PC-9 (cell line): ENCODE measurements at regions of chr4 and their contacts with region 1.

Region 1: DNA sequence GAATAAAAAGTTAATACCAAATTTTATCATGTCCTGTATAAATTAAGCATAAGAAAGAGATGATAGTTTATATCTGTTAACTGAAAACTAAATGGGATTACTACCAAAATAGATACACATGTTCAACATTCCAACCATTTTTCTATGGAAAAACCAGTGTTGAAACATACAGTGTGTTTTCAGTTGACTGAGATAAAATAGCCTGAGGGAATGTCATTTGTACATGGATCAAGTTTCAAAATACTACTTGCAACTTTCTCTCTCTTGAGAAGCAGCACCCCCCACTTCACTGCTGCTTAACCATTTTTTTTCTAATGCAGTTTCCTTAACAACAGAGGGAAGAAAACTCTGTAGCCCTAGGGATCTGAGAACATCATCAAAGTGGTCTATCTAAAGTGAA is 70.8 kb downstream of the NPNT start:
- DNase-seq: peak; percentile 2 to 65
- H3K4me3 ChIP-seq: no peak overlapping the region
- H3K27ac ChIP-seq: no peak overlapping the region
- H3K4me1 ChIP-seq: 0 out of 2 replicates have a peak, but pooled peaks cover 8% of the 10 kb centered on the region
- H3K27me3 ChIP-seq: no peaks in the 10 kb centered on the region
- CTCF ChIP-seq: no peak

Region 2: GRCh38 chr4:106062452-106062875 is 96.4 kb after region 1 on chr4:
- CTCF ChIA-PET with region 1: no interaction called
- POLR2A ChIA-PET with region 1: no interaction called
- intact Hi-C with region 1: loop called (anchors 1 kb)
- DNase-seq: peak in 1 of 2 experiments; percentile 31
- H3K4me3 ChIP-seq: no peak overlapping the region
- H3K27ac ChIP-seq: 0 out of 2 replicates have a peak overlapping the region, but pooled peaks have one; percentile 26
- H3K4me1 ChIP-seq: peaks cover 15% of the 10 kb centered on the region
- H3K27me3 ChIP-seq: no peaks in the 10 kb centered on the region
- CTCF ChIP-seq: no peak

Region 3: DNA sequence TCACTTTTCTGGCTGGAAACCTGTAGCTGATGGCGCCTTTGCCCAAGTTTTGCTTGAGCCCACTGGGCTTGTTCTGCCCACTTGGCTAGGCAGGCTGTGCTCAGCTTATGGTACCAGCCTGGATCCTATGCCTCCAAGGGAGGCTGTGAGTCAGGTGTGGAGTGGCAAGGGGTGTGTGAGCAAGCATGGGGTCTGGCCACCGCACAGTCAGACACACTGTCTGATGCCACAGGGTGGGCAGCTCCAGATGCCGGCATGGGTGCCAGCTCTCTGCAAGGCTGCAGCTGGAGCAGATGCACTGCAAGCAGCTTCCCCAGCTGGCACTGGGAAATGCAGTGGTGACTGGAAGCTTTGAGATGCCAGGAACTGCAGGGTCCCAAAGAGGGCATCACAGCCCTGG is 418.8 kb after region 1 on chr4:
- CTCF ChIA-PET with region 1: no interaction called
- POLR2A ChIA-PET with region 1: no interaction called
- intact Hi-C with region 1: no loop called
- DNase-seq: no peak
- H3K4me3 ChIP-seq: no peak overlapping the region
- H3K27ac ChIP-seq: no peak overlapping the region
- H3K4me1 ChIP-seq: no peaks in the 10 kb centered on the region
- H3K27me3 ChIP-seq: no peaks in the 10 kb centered on the region
- CTCF ChIP-seq: no peak